Left ventricle myocardium superior (tissue), 1 donor: ENCODE measurements at regions of chr6 and their contacts with region 1.

Region 1: GRCh38 chr6:122033539-122034181 is 365.8 kb upstream of the HSF2 start:
- DNase-seq: no peak
- ATAC-seq: peak; percentile 87

Region 2: GRCh38 chr6:120894077-120894476 is 1139.6 kb before region 1 on chr6:
- intact Hi-C with region 1: no loop called
- DNase-seq: no peak
- ATAC-seq: no peak

Region 3: DNA sequence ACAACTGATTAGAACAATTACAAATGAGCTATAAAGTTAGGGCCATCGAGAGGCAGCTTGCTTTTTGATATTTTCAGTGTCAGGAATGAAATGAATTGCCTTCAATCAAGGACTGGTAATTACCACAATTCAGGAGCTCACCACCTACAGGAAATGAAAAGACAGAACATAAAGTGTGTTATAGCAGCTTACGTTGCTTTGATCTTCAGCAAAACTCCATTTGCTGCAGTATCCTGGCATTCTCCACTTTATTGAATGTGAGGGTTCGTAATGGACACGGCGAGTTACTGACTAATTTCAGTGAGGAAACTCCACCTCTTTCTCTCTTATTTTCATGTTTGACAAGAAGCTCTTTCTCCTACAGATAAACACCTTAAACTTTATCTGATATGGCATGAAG is 74.2 kb before region 1 on chr6:
- intact Hi-C with region 1: no loop called
- DNase-seq: no peak
- ATAC-seq: no peak

Region 4: DNA sequence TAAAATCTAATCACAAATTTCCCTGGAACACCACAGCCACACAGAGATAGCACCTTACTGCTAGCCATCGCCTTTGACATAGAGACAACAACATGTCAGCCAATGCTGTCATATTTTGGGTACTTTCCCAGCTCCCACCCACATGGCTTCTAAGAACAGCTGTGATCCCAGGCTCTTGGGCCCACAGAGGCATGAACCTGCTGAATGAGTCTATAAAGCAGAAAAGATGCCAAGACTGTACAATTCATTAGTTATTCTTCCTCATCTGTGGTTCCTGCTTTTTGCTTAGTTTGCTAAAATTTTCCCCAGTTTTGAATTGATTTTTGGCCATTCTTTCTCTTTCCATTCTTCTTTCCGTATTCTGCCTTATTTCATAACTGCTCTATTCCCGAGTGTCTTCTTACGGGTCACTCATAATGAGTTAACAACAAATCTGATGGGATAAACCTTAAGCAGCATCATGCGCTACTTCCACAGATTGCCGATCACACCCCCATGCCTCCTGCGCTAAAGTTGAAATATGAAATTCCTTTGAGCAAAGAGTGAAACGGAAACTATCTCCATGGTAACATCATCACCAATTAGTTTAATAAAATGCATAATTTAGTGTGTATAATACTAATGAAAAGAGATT is 38.5 kb after region 1 on chr6:
- intact Hi-C with region 1: no loop called
- DNase-seq: no peak
- ATAC-seq: peak; percentile 61

Region 5: GRCh38 chr6:122184401-122184827 is 150.8 kb after region 1 on chr6:
- intact Hi-C with region 1: loop called (anchors 10 kb)
- DNase-seq: no peak
- ATAC-seq: peak; percentile 80